ENCODE measurements at regions of chr10 and their contacts with region 1.

Region 1: GRCh38 chr10:36489611-36490228 is 635.7 kb upstream of the ANKRD30A start:
- DNase-seq: peak; percentile 96
- ATAC-seq: peak; percentile 9
- H3K4me3 ChIP-seq: no peak overlapping the region
- H3K27ac ChIP-seq: peak overlapping the region; percentile 83
- H3K4me1 ChIP-seq: peaks cover 55% of the 10 kb centered on the region
- H3K27me3 ChIP-seq: no peaks in the 10 kb centered on the region
- CTCF ChIP-seq: no peak

Region 2: GRCh38 chr10:35795131-35795819 is 694.4 kb before region 1 on chr10:
- CTCF ChIA-PET with region 1: no interaction called
- POLR2A ChIA-PET with region 1: no interaction called
- intact Hi-C with region 1: loop called (anchors 1 kb)
- DNase-seq: peak; percentile 100
- ATAC-seq: peak; percentile 94
- H3K4me3 ChIP-seq: peak overlapping the region; percentile 12
- H3K27ac ChIP-seq: peak overlapping the region; percentile 80
- H3K4me1 ChIP-seq: peaks cover 46% of the 10 kb centered on the region
- H3K27me3 ChIP-seq: no peaks in the 10 kb centered on the region
- CTCF ChIP-seq: no peak

Region 3: GRCh38 chr10:36023939-36024338 is 465.8 kb before region 1 on chr10:
- CTCF ChIA-PET with region 1: no interaction called
- POLR2A ChIA-PET with region 1: no interaction called
- intact Hi-C with region 1: loop called (anchors 5 kb)
- DNase-seq: peak; percentile 100
- ATAC-seq: peak; percentile 98
- H3K4me3 ChIP-seq: no peak overlapping the region
- H3K27ac ChIP-seq: peak overlapping the region; percentile 69
- H3K4me1 ChIP-seq: peaks cover 15% of the 10 kb centered on the region
- H3K27me3 ChIP-seq: no peaks in the 10 kb centered on the region
- CTCF ChIP-seq: no peak

Region 4: GRCh38 chr10:36324831-36325387 is 164.8 kb before region 1 on chr10:
- CTCF ChIA-PET with region 1: no interaction called
- POLR2A ChIA-PET with region 1: no interaction called
- intact Hi-C with region 1: loop called (anchors 1 kb)
- DNase-seq: peak; percentile 89
- ATAC-seq: peak; percentile 88
- H3K4me3 ChIP-seq: no peak overlapping the region
- H3K27ac ChIP-seq: peak overlapping the region; percentile 57
- H3K4me1 ChIP-seq: peaks cover 18% of the 10 kb centered on the region
- H3K27me3 ChIP-seq: no peaks in the 10 kb centered on the region
- CTCF ChIP-seq: no peak

Region 5: DNA sequence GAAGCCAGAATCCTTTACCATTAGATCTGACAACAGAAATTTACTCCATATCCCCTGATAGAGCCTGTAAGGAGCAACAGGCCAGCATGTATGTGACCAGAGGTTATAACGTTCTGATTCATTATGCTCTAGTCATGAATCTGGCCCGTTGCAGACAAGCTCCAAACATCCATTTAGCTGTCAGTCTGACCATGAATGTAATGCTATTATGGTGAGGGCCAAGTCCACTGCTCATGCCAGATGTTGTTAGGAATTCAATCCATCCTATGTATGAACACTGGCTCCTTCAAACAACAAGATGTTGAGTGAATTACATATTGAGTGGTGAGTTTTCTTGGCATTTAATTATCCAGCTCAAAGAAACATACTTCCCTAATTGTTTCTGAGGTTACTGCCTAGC is 25.6 kb after region 1 on chr10:
- CTCF ChIA-PET with region 1: no interaction called
- POLR2A ChIA-PET with region 1: interaction called, 4 read pairs
- intact Hi-C with region 1: loop called (anchors 1 kb)
- DNase-seq: no peak
- ATAC-seq: peak; percentile 32
- H3K4me3 ChIP-seq: no peak overlapping the region
- H3K27ac ChIP-seq: peak overlapping the region; percentile 40; the same call in 1 of the 2 replicates
- H3K4me1 ChIP-seq: peaks cover 30% of the 10 kb centered on the region
- H3K27me3 ChIP-seq: no peaks in the 10 kb centered on the region
- CTCF ChIP-seq: no peak

Region 6: GRCh38 chr10:36779234-36779846 is 289.6 kb after region 1 on chr10:
- CTCF ChIA-PET with region 1: interaction called, 12 read pairs
- POLR2A ChIA-PET with region 1: no interaction called
- intact Hi-C with region 1: loop called (anchors 1 kb)
- DNase-seq: peak; percentile 100
- ATAC-seq: peak; percentile 98
- H3K4me3 ChIP-seq: no peak overlapping the region
- H3K27ac ChIP-seq: peak overlapping the region; percentile 13
- H3K4me1 ChIP-seq: peaks cover 25% of the 10 kb centered on the region
- H3K27me3 ChIP-seq: no peaks in the 10 kb centered on the region
- CTCF ChIP-seq: peak; percentile 100

Measured in PC-3 (cell line).